B cell (primary cell): ENCODE measurements at regions of chr12 and their contacts with region 1.

Region 1: DNA sequence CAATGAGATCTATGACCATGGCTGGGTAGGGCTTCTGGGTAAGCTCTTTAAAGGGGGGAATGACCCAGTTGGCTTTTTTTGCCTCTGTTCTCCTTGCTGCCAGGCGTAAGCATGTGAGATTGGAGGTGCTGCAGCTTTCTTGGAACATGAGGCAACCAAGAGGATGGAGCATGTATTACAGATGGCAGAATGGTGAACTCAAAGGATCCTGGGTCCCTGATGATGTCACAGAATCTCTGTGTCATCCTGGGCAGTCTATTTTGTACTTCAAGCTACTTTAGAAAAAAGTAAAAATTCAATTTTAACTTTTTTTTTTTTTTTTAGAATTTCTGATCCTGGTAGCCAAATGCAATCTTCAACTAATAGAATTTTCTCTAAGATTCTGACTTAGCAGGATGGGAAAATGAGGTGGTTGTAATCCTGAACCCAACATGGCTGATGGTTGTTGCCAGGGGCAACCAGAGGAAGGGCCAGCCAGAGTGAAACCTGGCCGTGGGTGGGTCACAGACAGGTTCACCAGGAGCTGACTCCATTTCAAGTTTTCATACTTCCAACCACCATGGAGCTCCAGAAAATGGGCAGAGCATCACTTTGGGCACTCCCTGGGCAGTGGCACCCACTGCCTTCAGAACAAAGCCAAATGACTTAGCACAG is 7.8 kb downstream of the KRT82 start:
- DNase-seq: no peak
- ATAC-seq: no peak
- H3K4me3 ChIP-seq: no peak overlapping the region
- H3K4me3 Mint-ChIP-seq: no peak overlapping the region
- H3K27ac ChIP-seq: no peak overlapping the region
- H3K27ac Mint-ChIP-seq: no peak overlapping the region
- H3K4me1 ChIP-seq: no peaks in the 10 kb centered on the region
- H3K4me1 Mint-ChIP-seq: no peaks in the 10 kb centered on the region
- H3K27me3 ChIP-seq: peaks cover 0 to 3% (median 0%) of the 10 kb centered on the region in 4 experiments
- H3K27me3 Mint-ChIP-seq: peaks cover 10% of the 10 kb centered on the region
- CTCF ChIP-seq: no peak

Region 2: GRCh38 chr12:51183816-51184215 is 1214.5 kb before region 1 on chr12:
- CTCF ChIA-PET with region 1: no interaction called
- POLR2A ChIA-PET with region 1: interaction called, 11 read pairs
- intact Hi-C with region 1: no loop called
- DNase-seq: no peak
- ATAC-seq: no peak
- H3K4me3 ChIP-seq: no peak overlapping the region
- H3K4me3 Mint-ChIP-seq: no peak overlapping the region
- H3K27ac ChIP-seq: no peak overlapping the region
- H3K27ac Mint-ChIP-seq: no peak overlapping the region
- H3K4me1 ChIP-seq: peaks cover 23 to 27% of the 10 kb centered on the region in 2 donors
- H3K4me1 Mint-ChIP-seq: peaks cover 24% of the 10 kb centered on the region
- H3K27me3 ChIP-seq: no peaks in the 10 kb centered on the region
- H3K27me3 Mint-ChIP-seq: no peaks in the 10 kb centered on the region
- CTCF ChIP-seq: no peak

Region 3: GRCh38 chr12:52258335-52258901 is 139.9 kb before region 1 on chr12:
- CTCF ChIA-PET with region 1: no interaction called
- POLR2A ChIA-PET with region 1: no interaction called
- intact Hi-C with region 1: no loop called
- DNase-seq: no peak
- ATAC-seq: no peak
- H3K4me3 ChIP-seq: no peak overlapping the region
- H3K4me3 Mint-ChIP-seq: no peak overlapping the region
- H3K27ac ChIP-seq: no peak overlapping the region
- H3K27ac Mint-ChIP-seq: no peak overlapping the region
- H3K4me1 ChIP-seq: no peaks in the 10 kb centered on the region
- H3K4me1 Mint-ChIP-seq: no peaks in the 10 kb centered on the region
- H3K27me3 ChIP-seq: peaks cover 0 to 50% (median 7%) of the 10 kb centered on the region in 4 experiments
- H3K27me3 Mint-ChIP-seq: peaks cover 59% of the 10 kb centered on the region
- CTCF ChIP-seq: no peak

Region 4: DNA sequence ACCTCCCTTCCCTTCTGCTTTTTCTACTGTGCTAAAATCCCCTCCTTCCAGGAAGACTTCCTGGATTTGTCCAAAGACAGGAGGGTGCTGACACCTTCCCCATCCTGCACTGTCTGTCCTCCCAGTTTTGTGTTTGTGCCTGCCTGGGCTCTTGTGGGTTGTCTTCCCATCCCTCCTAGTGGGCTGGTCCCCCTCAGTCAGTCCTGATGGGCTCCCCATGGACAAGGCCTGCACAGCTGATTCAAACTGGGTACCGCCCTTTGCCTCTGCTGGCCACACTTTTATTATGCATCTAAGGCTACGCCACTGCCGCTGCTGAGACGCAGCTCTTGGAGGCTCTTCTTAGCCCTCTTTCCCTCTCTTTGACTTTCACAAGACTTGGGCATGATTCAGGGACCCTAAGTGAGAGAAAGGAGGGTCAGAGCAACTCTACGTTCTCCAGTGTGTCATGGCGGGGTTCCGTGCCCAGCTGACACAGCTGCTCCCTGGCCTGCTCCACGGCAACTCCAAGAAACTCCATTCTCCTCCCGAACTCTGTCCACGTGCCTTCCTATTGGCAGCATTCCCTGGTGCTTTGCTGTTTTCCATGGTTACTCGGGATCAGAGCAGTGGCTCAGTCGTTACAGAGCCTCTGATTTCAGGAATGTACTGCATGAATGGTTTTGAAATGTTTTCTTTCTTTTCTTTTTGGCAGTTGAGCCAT is 27.2 kb before region 1 on chr12:
- CTCF ChIA-PET with region 1: no interaction called
- POLR2A ChIA-PET with region 1: no interaction called
- intact Hi-C with region 1: no loop called
- DNase-seq: no peak
- ATAC-seq: no peak
- H3K4me3 ChIP-seq: no peak overlapping the region
- H3K4me3 Mint-ChIP-seq: no peak overlapping the region
- H3K27ac ChIP-seq: no peak overlapping the region
- H3K27ac Mint-ChIP-seq: no peak overlapping the region
- H3K4me1 ChIP-seq: no peaks in the 10 kb centered on the region
- H3K4me1 Mint-ChIP-seq: no peaks in the 10 kb centered on the region
- H3K27me3 ChIP-seq: peaks cover 0 to 11% (median 4%) of the 10 kb centered on the region in 4 experiments
- H3K27me3 Mint-ChIP-seq: peaks cover 27% of the 10 kb centered on the region
- CTCF ChIP-seq: no peak

Region 5: GRCh38 chr12:52539083-52539820 is 140.9 kb after region 1 on chr12:
- CTCF ChIA-PET with region 1: no interaction called
- POLR2A ChIA-PET with region 1: no interaction called
- intact Hi-C with region 1: no loop called
- DNase-seq: no peak
- ATAC-seq: no peak
- H3K4me3 ChIP-seq: no peak overlapping the region
- H3K4me3 Mint-ChIP-seq: no peak overlapping the region
- H3K27ac ChIP-seq: no peak overlapping the region
- H3K27ac Mint-ChIP-seq: no peak overlapping the region
- H3K4me1 ChIP-seq: no peaks in the 10 kb centered on the region
- H3K4me1 Mint-ChIP-seq: no peaks in the 10 kb centered on the region
- H3K27me3 ChIP-seq: peaks cover 0 to 5% (median 0%) of the 10 kb centered on the region in 4 experiments
- H3K27me3 Mint-ChIP-seq: peaks cover 10% of the 10 kb centered on the region
- CTCF ChIP-seq: no peak